Endothelial cell of umbilical vein (primary cell): ENCODE measurements at regions of chr17 and their contacts with region 1.

Region 1: GRCh38 chr17:29369831-29370735 is 20.1 kb upstream of the TAOK1 start:
- DNase-seq: peak; percentile 91
- H3K4me3 ChIP-seq: peak overlapping the region in 1 of 3 experiments; percentile 65
- H3K27ac ChIP-seq: no peak overlapping the region
- H3K4me1 ChIP-seq: no peaks in the 10 kb centered on the region
- H3K27me3 ChIP-seq: no peaks in the 10 kb centered on the region
- CTCF ChIP-seq: peak; percentile 59 to 63
- POLR2A ChIP-seq: no peak

Region 2: GRCh38 chr17:29293890-29294579 is 76.0 kb before region 1 on chr17 and contains the start of gene NUFIP2:
- CTCF ChIA-PET with region 1: interaction called, 10 read pairs
- POLR2A ChIA-PET with region 1: interaction called, 3 read pairs
- dilution Hi-C with region 1: no loop called
- intact Hi-C with region 1: no loop called
- DNase-seq: peak; percentile 99
- H3K4me3 ChIP-seq: peak within 1 kb of the TSS; percentile 70 to 95 (median 78)
- H3K27ac ChIP-seq: peak within 1 kb of the TSS; percentile 82
- H3K4me1 ChIP-seq: peaks cover 30% of the 10 kb centered on the region
- H3K27me3 ChIP-seq: no peaks in the 10 kb centered on the region
- CTCF ChIP-seq: no peak
- POLR2A ChIP-seq: peak; percentile 100
- total RNA-seq, gene NUFIP2: 51.1 and 60.7 TPM in 2 replicates

Region 3: DNA sequence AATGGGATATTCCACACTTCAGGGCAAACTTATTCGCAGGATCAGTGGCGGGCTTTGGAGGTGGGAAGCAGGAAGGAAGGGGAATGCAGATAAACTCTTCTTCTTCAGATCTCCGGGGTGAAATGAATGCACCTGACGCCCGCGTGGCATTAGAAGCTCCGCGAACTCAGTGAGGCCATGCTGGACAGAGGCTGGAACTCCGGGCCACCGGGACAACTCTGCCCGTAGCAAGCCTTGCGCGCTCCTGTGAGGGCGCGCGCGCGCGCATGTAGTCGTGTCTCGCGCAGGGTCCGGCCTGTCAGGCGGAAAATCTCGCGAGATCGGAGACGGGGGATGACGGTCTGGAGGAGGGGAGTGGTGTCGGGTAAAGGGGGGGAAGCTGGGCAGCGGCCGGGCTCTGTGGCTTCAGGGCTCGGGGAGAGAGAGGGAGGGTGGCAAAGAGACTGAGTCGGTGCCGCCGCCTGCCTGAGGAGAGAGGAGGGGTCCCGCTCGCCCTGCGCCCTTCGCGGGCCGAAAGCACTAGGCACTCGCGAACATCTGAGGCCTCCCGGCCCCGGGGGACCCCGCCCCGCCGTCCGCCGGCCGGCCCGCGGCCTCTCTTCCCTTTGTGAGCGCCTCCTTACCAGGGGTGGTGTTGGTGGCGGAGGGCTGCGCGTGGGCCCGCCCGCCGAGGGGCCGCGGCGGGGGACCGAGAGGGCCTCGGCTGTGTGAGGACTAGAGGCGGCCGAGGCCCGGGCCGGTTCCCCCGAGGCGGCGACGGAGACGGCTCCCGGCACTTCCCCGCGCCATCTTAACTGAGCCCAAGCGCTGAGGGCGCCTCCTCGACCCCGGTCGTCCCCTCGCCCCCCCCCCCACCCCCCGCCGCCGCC is 20.1 kb after region 1 on chr17 and contains the start of gene TAOK1:
- CTCF ChIA-PET with region 1: interaction called, 23 read pairs
- POLR2A ChIA-PET with region 1: interaction called, 3 read pairs
- dilution Hi-C with region 1: no loop called
- intact Hi-C with region 1: loop called (anchors 2 kb)
- DNase-seq: peak; percentile 97
- H3K4me3 ChIP-seq: peak within 1 kb of the TSS; percentile 85 to 97 (median 87)
- H3K27ac ChIP-seq: peak within 1 kb of the TSS; percentile 86
- H3K4me1 ChIP-seq: peaks cover 27% of the 10 kb centered on the region
- H3K27me3 ChIP-seq: peaks cover 0 to 1% of the 10 kb centered on the region in 2 experiments
- CTCF ChIP-seq: no peak
- POLR2A ChIP-seq: peak; percentile 96
- total RNA-seq, gene TAOK1: 64.3 and 82.2 TPM in 2 replicates

Region 4: DNA sequence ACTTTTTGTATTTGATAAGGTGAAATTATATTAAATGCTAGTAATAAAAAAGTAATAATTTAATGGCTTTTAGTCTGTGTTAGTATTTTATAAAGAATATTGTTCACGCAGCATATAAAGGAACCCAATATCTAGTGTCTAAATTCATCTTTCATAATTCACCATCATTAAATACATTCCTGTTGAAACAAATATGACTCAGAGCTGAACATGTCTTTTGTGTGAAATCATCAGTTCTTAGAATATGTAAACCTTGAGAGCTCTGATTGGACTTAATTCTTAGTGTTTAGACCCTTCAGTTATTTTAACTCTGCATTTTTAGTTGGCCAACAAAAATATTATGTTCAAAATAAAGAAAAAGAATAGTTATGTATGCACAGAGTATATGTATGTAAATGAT is 124.9 kb after region 1 on chr17:
- CTCF ChIA-PET with region 1: interaction called, 13 read pairs
- POLR2A ChIA-PET with region 1: no interaction called
- dilution Hi-C with region 1: no loop called
- intact Hi-C with region 1: no loop called
- DNase-seq: no peak
- H3K4me3 ChIP-seq: no peak overlapping the region
- H3K27ac ChIP-seq: no peak overlapping the region
- H3K4me1 ChIP-seq: no peaks in the 10 kb centered on the region
- H3K27me3 ChIP-seq: no peaks in the 10 kb centered on the region
- CTCF ChIP-seq: no peak
- POLR2A ChIP-seq: no peak

Region 5: DNA sequence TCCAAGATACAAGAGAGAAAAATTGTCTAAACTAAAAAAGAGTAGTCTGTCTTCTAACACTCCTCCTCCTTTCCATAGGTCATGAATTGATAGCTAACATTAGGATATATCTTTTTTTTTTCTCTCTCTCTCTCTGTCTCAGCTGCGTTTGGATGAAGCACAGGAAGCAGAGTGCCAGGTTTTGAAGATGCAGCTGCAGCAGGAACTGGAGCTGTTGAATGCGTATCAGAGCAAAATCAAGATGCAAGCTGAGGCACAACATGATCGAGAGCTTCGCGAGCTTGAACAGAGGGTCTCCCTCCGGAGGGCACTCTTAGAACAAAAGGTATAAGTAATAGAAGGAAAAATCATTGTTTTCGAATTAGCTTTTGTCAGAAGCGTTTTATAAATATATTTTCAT is 163.9 kb after region 1 on chr17:
- CTCF ChIA-PET with region 1: interaction called, 119 read pairs
- POLR2A ChIA-PET with region 1: no interaction called
- dilution Hi-C with region 1: no loop called
- intact Hi-C with region 1: loop called (anchors 1 kb)
- DNase-seq: no peak
- H3K4me3 ChIP-seq: no peak overlapping the region
- H3K27ac ChIP-seq: no peak overlapping the region
- H3K4me1 ChIP-seq: no peaks in the 10 kb centered on the region
- H3K27me3 ChIP-seq: no peaks in the 10 kb centered on the region
- CTCF ChIP-seq: no peak
- POLR2A ChIP-seq: no peak

Region 6: DNA sequence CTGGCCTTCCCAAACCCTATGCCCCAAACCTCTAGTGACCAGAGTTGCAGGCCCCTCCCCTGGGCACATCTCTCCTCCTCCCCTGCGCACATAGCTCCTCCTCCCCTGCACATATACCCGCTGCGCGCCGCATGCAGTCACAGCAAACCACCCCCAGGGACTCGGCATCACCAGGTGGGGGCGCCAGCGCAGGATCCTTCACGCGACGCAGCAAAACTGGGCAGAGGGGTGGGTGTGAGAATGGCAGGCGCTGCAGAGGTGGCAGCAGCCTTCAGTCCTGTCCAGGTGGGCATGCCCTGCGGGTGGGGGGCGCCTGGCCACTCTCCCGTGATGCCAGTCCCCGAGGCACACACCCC is 247.0 kb after region 1 on chr17:
- CTCF ChIA-PET with region 1: interaction called, 31 read pairs
- POLR2A ChIA-PET with region 1: no interaction called
- dilution Hi-C with region 1: no loop called
- intact Hi-C with region 1: no loop called
- DNase-seq: peak; percentile 86
- H3K4me3 ChIP-seq: peak overlapping the region in 1 of 3 experiments; percentile 2
- H3K27ac ChIP-seq: no peak overlapping the region
- H3K4me1 ChIP-seq: peaks cover 33% of the 10 kb centered on the region
- H3K27me3 ChIP-seq: no peaks in the 10 kb centered on the region
- CTCF ChIP-seq: peak; percentile 91 to 94
- POLR2A ChIP-seq: no peak